ENCODE measurements at regions of chr18 and their contacts with region 1.

Region 1: DNA sequence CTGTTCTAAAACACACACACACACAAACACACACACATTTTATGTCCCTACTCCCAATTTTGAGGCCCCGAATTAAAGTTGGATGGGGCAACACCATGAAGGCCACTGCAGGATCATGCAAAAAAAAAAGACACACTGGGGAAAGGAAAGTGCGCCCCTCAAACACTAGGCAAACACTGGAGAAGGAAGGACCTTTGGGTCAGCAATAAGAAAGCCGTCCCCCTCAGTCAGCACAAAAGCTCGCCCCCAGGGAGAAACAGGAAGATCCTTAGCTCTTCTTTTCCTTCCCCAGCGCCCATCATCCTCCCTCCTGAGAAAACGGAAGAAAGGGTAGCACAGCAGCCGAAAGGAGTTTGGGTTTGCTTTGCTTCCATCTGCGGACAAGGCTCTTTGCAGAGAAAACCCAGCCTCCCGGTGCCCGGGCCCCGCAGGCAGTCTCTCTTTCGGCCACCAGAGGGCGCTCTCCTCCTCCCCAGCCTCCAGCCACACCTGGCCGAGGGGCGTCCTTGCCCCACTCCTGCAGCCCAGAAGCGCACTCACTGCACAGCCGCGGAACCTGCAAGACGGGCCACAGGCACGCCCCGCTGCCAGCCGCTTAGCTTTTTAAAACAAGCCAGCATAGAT is 248.5 kb downstream of the CDH20 start:
- DNase-seq: peak; percentile 47
- ATAC-seq: peak; percentile 97
- H3K4me3 ChIP-seq: peak overlapping the region; percentile 45
- H3K27ac ChIP-seq: peak overlapping the region; percentile 57; the same call in 1 of the 2 replicates
- H3K4me1 ChIP-seq: peaks cover 4% of the 10 kb centered on the region
- H3K27me3 ChIP-seq: no peaks in the 10 kb centered on the region
- CTCF ChIP-seq: peak; percentile 88
- POLR2A ChIP-seq: no peak
- RAD21 ChIP-seq: peak; percentile 84

Region 2: GRCh38 chr18:61596296-61596695 is 14.6 kb after region 1 on chr18:
- CTCF ChIA-PET with region 1: interaction called, 15 read pairs
- POLR2A ChIA-PET with region 1: no interaction called
- dilution Hi-C with region 1: no loop called
- in situ Hi-C with region 1: no loop called
- intact Hi-C with region 1: no loop called
- DNase-seq: peak; percentile 45
- ATAC-seq: no peak
- H3K4me3 ChIP-seq: no peak overlapping the region
- H3K27ac ChIP-seq: no peak overlapping the region
- H3K4me1 ChIP-seq: peaks cover 2% of the 10 kb centered on the region
- H3K27me3 ChIP-seq: no peaks in the 10 kb centered on the region
- CTCF ChIP-seq: no peak
- POLR2A ChIP-seq: no peak
- RAD21 ChIP-seq: no peak

Region 3: GRCh38 chr18:61606759-61607158 is 25.1 kb after region 1 on chr18:
- CTCF ChIA-PET with region 1: interaction called, 4 read pairs
- POLR2A ChIA-PET with region 1: interaction called, 12 read pairs
- dilution Hi-C with region 1: no loop called
- in situ Hi-C with region 1: no loop called
- intact Hi-C with region 1: no loop called
- DNase-seq: peak; percentile 93
- ATAC-seq: peak; percentile 65
- H3K4me3 ChIP-seq: peak overlapping the region; percentile 43
- H3K27ac ChIP-seq: peak overlapping the region; percentile 82
- H3K4me1 ChIP-seq: peaks cover 14% of the 10 kb centered on the region
- H3K27me3 ChIP-seq: no peaks in the 10 kb centered on the region
- CTCF ChIP-seq: no peak
- POLR2A ChIP-seq: no peak; the same call in 1 of the 2 replicates
- RAD21 ChIP-seq: no peak

Region 4: GRCh38 chr18:61893971-61894750 is 312.5 kb after region 1 on chr18:
- CTCF ChIA-PET with region 1: interaction called, 3 read pairs
- POLR2A ChIA-PET with region 1: no interaction called
- dilution Hi-C with region 1: no loop called
- in situ Hi-C with region 1: loop called (anchors 10 kb)
- intact Hi-C with region 1: loop called (anchors 5 kb)
- DNase-seq: peak; percentile 64
- ATAC-seq: peak; percentile 93
- H3K4me3 ChIP-seq: peak overlapping the region; percentile 95
- H3K27ac ChIP-seq: peak overlapping the region; percentile 74
- H3K4me1 ChIP-seq: peaks cover 7% of the 10 kb centered on the region
- H3K27me3 ChIP-seq: no peaks in the 10 kb centered on the region
- CTCF ChIP-seq: peak; percentile 54
- POLR2A ChIP-seq: peak; percentile 76
- RAD21 ChIP-seq: peak; percentile 60

Region 5: DNA sequence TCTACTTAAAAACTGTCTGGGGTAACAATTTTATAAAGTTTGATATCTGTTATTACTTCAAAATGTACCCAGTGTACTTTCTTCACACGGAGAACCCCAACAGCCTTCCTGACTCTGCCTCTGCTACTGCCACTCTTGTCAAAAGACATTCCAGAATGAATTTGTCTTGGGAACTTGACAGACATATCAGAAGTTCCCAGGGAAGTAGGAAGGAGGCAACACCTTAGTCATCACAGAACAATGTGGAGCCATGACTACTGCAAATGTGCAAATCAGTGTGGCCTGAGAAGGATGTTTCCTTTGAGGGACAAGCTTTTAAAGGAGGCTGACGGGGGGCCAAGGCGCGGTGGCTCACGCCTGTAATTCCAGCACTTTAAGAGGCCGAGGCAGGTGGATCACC is 444.9 kb after region 1 on chr18:
- CTCF ChIA-PET with region 1: no interaction called
- POLR2A ChIA-PET with region 1: no interaction called
- dilution Hi-C with region 1: no loop called
- in situ Hi-C with region 1: no loop called
- intact Hi-C with region 1: loop called (anchors 10 kb)
- DNase-seq: peak; percentile 66
- ATAC-seq: no peak; the same call in 1 of the 2 replicates
- H3K4me3 ChIP-seq: no peak overlapping the region
- H3K27ac ChIP-seq: no peak overlapping the region
- H3K4me1 ChIP-seq: peaks cover 9% of the 10 kb centered on the region
- H3K27me3 ChIP-seq: no peaks in the 10 kb centered on the region
- CTCF ChIP-seq: no peak
- POLR2A ChIP-seq: no peak
- RAD21 ChIP-seq: no peak

Measured in IMR-90 (cell line).